Right cardiac atrium (tissue), 5 donors: ENCODE measurements at regions of chr5 and their contacts with region 1.

Region 1: DNA sequence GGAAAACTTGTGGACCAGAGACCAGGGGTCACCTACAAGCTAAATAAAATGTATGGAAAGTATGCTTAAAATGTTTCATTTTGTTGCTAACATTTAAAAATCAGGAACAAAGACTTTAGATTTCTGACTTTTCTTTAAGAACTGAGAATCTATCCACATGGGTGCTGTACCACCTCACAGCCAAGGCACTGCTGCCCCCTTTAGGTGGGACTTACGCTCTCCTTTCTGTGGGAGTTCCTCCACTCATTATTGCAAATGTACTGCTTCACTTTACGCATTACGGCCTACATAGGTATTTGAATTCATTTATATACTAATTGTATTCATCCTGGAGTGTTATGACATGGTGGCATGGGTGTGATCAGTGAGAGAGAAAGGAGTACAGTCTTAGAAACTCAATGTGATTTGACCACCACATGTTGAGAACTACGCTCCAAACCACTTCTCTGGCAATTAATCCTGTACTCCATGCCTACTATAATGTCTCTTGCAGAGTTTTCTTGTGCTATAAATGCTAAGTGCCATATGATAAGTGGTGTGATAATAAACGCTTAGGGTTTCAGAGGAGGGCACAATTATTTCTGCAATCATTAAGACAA is 24.7 kb upstream of the CETN3 start:
- DNase-seq: peak in 2 of 3 donors; percentile 15 to 67
- ATAC-seq: peak; percentile 57
- H3K4me3 ChIP-seq: no peak overlapping the region
- H3K27ac ChIP-seq: no peak overlapping the region
- H3K4me1 ChIP-seq: no peaks in the 10 kb centered on the region
- H3K27me3 ChIP-seq: no peaks in the 10 kb centered on the region

Region 2: GRCh38 chr5:90606539-90606938 is 172.3 kb after region 1 on chr5:
- intact Hi-C with region 1: loop called in 1 of 4 experiments (anchors 10 kb)
- DNase-seq: no peak
- ATAC-seq: no peak
- H3K4me3 ChIP-seq: no peak overlapping the region
- H3K27ac ChIP-seq: no peak overlapping the region
- H3K4me1 ChIP-seq: no peaks in the 10 kb centered on the region
- H3K27me3 ChIP-seq: no peaks in the 10 kb centered on the region